ENCODE measurements at regions of chr22 and their contacts with region 1.

Region 1: GRCh38 chr22:39117585-39118191 is 20.6 kb downstream of the APOBEC3H start:
- DNase-seq: peak in 2 of 5 donors; percentile 51 to 52
- ATAC-seq: no peak
- H3K4me3 ChIP-seq: peak overlapping the region in 1 of 12 donors; percentile 8
- H3K27ac ChIP-seq: peak overlapping the region in 1 of 12 donors; percentile 62
- H3K4me1 ChIP-seq: peaks cover 0 to 12% (median 0%) of the 10 kb centered on the region in 12 donors
- H3K27me3 ChIP-seq: peaks cover 0 to 28% (median 6%) of the 10 kb centered on the region in 9 donors
- CTCF ChIP-seq: peak in 10 of 12 donors; percentile 21 to 55 (median 40)
- POLR2A ChIP-seq: no peak

Region 2: DNA sequence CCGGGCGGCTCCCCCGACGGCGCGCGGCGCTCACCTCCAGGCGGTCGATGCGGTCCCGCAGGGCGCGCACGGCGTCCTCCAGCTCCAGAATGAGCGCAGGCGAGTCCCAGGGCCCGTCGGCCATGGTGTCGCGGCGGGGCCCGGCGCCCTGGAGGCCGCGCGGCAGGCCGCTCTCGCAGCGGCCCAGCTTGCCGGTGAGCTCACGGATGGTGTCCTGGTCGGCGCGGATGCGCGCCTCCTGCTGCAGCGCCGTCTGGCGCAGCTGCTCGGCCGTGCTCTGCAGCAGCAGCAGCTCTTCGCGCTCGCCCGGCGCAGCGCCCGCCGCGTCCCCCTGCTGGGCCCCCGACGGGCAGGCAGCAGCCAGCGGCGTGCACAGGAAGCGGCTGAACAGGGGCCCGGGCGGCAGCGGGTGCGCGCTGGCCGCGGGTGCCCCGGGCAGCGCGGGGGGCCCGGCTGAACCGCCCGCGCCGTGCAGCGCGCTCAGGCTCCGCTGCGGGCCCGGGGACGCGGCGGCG is 274.4 kb before region 1 on chr22:
- intact Hi-C with region 1: no loop called
- DNase-seq: peak; percentile 34 to 77 (median 55)
- ATAC-seq: peak; percentile 56 to 76 (median 74)
- H3K4me3 ChIP-seq: peak overlapping the region; percentile 40 to 69 (median 55)
- H3K27ac ChIP-seq: peak overlapping the region in 10 of 12 donors; percentile 53 to 80 (median 64)
- H3K4me1 ChIP-seq: peaks cover 0 to 27% (median 9%) of the 10 kb centered on the region in 12 donors
- H3K27me3 ChIP-seq: peaks cover 0 to 45% (median 2%) of the 10 kb centered on the region in 9 donors
- CTCF ChIP-seq: peak in 11 of 12 donors; percentile 10 to 54 (median 32)
- POLR2A ChIP-seq: no peak

Region 3: GRCh38 chr22:39003165-39003638 is 114.5 kb before region 1 on chr22:
- intact Hi-C with region 1: loop called in 9 of 10 experiments (anchors 2 to 5 kb)
- DNase-seq: peak; percentile 67 to 81 (median 75)
- ATAC-seq: peak; percentile 81 to 94 (median 92)
- H3K4me3 ChIP-seq: no peak overlapping the region
- H3K27ac ChIP-seq: no peak overlapping the region
- H3K4me1 ChIP-seq: peaks cover 0 to 12% (median 1%) of the 10 kb centered on the region in 12 donors
- H3K27me3 ChIP-seq: peaks cover 0 to 5% (median 0%) of the 10 kb centered on the region in 9 donors
- CTCF ChIP-seq: peak; percentile 63 to 86 (median 75)
- POLR2A ChIP-seq: no peak

Region 4: GRCh38 chr22:39013942-39014722 is 103.6 kb before region 1 on chr22 and contains the start of gene APOBEC3C:
- intact Hi-C with region 1: loop called in 9 of 10 experiments (anchors 5 kb)
- DNase-seq: peak; percentile 77 to 85 (median 78)
- ATAC-seq: peak; percentile 90 to 97 (median 96)
- H3K4me3 ChIP-seq: peak within 1 kb of the TSS; percentile 20 to 71 (median 61)
- H3K27ac ChIP-seq: peak within 1 kb of the TSS in 11 of 12 donors; percentile 70 to 94 (median 77)
- H3K4me1 ChIP-seq: peaks cover 0 to 22% (median 10%) of the 10 kb centered on the region in 12 donors
- H3K27me3 ChIP-seq: no peaks in the 10 kb centered on the region
- CTCF ChIP-seq: no peak
- POLR2A ChIP-seq: peak in 1 of 2 donors; percentile 53
- total RNA-seq, gene APOBEC3C: 7.3 to 53.8 (median 26.3) TPM